CD8-positive, alpha-beta T cell (primary cell): ENCODE measurements at regions of chr5 and their contacts with region 1.

Region 1: GRCh38 chr5:59356813-59357380 is 536.6 kb downstream of the PDE4D start:
- DNase-seq: peak in 2 of 9 experiments; percentile 29 to 41
- ATAC-seq: no peak
- H3K4me3 ChIP-seq: no peak overlapping the region
- H3K4me3 Mint-ChIP-seq: no peak overlapping the region
- H3K27ac ChIP-seq: peak overlapping the region in 1 of 2 experiments; percentile 9
- H3K27ac Mint-ChIP-seq: no peak overlapping the region
- H3K4me1 ChIP-seq: no peaks in the 10 kb centered on the region
- H3K4me1 Mint-ChIP-seq: no peaks in the 10 kb centered on the region
- H3K27me3 ChIP-seq: no peaks in the 10 kb centered on the region
- H3K27me3 Mint-ChIP-seq: peaks cover 11% of the 10 kb centered on the region
- CTCF ChIP-seq: no peak

Region 2: DNA sequence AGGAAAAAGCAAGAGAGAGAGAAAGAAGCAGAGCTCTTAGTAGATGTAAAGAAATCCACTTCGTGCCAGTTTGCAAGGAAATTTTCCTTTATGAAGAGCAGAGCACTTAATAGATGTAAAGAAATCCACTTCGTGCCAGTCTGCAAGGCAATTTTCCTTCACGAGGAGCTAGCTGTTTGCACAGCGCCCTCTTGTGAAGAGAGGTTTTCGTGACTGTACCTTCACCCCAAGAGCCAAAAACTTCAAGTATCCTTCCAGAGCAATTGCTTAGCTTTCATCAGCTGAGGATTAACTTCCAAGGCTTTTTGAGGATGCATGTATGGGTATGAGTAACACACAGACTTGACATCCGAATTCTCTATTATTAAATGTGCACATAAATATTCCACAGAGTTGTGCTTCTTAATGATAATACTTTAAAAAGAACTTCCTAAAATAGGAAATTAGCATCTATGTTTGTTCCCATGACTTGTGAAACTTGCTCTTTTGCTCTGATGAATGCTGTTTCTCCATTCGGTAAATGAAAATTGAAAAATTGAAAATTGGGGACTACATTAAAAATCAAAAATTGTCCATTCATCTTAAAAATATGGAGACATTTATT is 11.0 kb after region 1 on chr5:
- CTCF ChIA-PET with region 1: interaction called, 20 read pairs
- POLR2A ChIA-PET with region 1: no interaction called
- intact Hi-C with region 1: no loop called
- DNase-seq: peak; percentile 1 to 64 (median 40)
- ATAC-seq: peak; percentile 46
- H3K4me3 ChIP-seq: no peak overlapping the region
- H3K4me3 Mint-ChIP-seq: no peak overlapping the region
- H3K27ac ChIP-seq: no peak overlapping the region
- H3K27ac Mint-ChIP-seq: no peak overlapping the region
- H3K4me1 ChIP-seq: no peaks in the 10 kb centered on the region
- H3K4me1 Mint-ChIP-seq: no peaks in the 10 kb centered on the region
- H3K27me3 ChIP-seq: no peaks in the 10 kb centered on the region
- H3K27me3 Mint-ChIP-seq: peaks cover 17% of the 10 kb centered on the region
- CTCF ChIP-seq: peak; percentile 63

Region 3: DNA sequence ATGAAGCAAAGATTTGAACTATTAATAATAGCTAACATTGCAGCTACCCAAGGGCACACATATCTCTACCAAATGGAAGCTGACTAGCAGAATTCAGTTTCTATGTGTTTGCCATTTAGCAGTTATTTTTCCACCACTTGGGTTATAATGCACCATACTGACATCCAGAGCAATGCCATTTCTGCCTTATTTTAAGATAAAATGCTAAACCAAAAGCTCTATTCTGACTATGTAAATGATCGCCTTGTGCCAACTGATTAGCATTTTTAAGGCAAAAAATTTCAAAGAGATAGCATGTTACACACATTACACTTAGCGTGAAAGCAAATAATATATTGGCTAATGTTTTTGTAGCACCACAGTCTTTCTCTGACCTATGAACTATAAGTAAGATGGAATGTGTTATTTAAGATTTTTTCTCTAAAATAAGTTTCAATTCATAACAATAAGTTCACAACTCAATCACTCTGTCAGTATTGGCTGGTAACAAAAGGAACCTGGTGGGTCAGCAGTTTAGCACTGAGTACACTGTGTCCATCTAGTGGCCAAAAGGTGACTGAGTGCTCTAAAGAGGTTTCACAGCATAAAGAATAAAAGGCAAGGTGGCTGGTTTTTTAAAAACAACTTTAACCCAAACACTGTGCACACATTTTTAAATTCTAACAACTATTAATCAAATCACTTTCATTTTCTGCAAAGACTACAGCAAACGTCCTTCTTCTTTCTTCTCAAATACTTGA is 93.2 kb after region 1 on chr5:
- CTCF ChIA-PET with region 1: no interaction called
- POLR2A ChIA-PET with region 1: no interaction called
- intact Hi-C with region 1: no loop called
- DNase-seq: no peak
- ATAC-seq: no peak
- H3K4me3 ChIP-seq: no peak overlapping the region
- H3K4me3 Mint-ChIP-seq: no peak overlapping the region
- H3K27ac ChIP-seq: no peak overlapping the region
- H3K27ac Mint-ChIP-seq: no peak overlapping the region
- H3K4me1 ChIP-seq: no peaks in the 10 kb centered on the region
- H3K4me1 Mint-ChIP-seq: no peaks in the 10 kb centered on the region
- H3K27me3 ChIP-seq: no peaks in the 10 kb centered on the region
- H3K27me3 Mint-ChIP-seq: no peaks in the 10 kb centered on the region
- CTCF ChIP-seq: no peak